Gastrocnemius medialis (tissue), 4 donors: ENCODE measurements at regions of chr4 and their contacts with region 1.

Region 1: DNA sequence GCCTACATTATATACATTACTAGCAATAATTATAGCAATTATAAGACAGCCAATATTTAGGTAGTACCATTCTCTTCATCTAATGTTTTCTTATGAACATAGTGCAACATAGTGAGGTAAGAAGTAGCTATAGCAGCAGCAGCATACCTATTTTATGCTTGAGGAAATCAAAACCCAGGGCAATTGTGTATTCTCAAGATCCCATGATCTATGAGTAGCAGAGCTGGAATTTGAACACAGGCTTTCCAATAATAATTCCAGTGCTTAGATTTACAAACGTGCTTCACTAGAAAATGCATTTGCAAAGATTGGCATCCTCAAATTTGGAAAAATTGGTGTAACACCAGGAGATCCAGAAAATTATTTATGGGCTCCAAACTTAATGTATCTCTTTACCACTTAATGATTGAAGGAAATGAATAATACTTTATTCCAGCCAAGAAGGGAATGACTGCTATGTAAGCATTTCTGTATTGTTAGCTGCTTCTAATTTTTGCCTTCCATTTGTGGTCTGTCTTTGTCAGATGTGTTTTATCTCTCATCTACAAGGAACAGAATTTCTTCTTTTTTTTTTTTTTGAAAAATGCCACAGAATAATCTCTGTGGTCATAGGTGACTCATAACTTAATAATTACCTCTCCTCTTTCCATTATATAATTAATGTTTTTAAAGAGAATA is 451.1 kb downstream of the ARAP2 start:
- DNase-seq: no peak
- ATAC-seq: no peak
- H3K4me3 ChIP-seq: no peak overlapping the region
- H3K27ac ChIP-seq: no peak overlapping the region
- H3K4me1 ChIP-seq: no peaks in the 10 kb centered on the region
- H3K27me3 ChIP-seq: no peaks in the 10 kb centered on the region
- CTCF ChIP-seq: no peak
- POLR2A ChIP-seq: no peak

Region 2: GRCh38 chr4:35884714-35885480 is 91.7 kb after region 1 on chr4:
- in situ Hi-C with region 1: loop called in 1 of 4 experiments (anchors 25 kb)
- intact Hi-C with region 1: no loop called
- DNase-seq: no peak
- ATAC-seq: no peak
- H3K4me3 ChIP-seq: no peak overlapping the region
- H3K27ac ChIP-seq: no peak overlapping the region
- H3K4me1 ChIP-seq: no peaks in the 10 kb centered on the region
- H3K27me3 ChIP-seq: no peaks in the 10 kb centered on the region
- CTCF ChIP-seq: no peak
- POLR2A ChIP-seq: no peak